ENCODE measurements at regions of chr3 and their contacts with region 1.

Region 1: DNA sequence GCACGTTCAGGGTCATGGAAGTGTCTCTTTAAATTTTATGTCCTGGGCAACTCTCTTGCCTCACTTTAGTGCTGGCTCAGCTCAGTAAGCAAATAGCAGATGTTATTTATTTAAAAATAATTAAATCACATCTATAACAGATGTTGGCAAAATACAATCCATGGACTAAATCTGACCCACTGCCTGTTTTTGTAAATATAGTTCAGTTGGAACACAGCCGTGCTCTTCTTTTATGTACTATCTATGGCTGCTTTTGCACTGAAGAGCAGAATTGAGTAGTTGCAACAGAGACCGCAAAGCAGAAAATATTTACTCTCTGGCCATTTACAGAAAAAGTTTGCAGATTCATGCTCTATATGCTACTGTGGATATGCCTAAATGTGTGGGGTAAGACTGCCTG is 79.2 kb downstream of the SAMMSON start:
- DNase-seq: no peak
- H3K4me3 ChIP-seq: no peak overlapping the region
- H3K27ac ChIP-seq: no peak overlapping the region
- H3K4me1 ChIP-seq: no peaks in the 10 kb centered on the region; a peak in 1 of 4 replicates
- H3K27me3 ChIP-seq: no peaks in the 10 kb centered on the region
- CTCF ChIP-seq: no peak
- EP300 ChIP-seq: peak in 1 of 2 experiments; percentile 21; a peak in 1 of 4 replicates
- RAD21 ChIP-seq: no peak

Region 2: DNA sequence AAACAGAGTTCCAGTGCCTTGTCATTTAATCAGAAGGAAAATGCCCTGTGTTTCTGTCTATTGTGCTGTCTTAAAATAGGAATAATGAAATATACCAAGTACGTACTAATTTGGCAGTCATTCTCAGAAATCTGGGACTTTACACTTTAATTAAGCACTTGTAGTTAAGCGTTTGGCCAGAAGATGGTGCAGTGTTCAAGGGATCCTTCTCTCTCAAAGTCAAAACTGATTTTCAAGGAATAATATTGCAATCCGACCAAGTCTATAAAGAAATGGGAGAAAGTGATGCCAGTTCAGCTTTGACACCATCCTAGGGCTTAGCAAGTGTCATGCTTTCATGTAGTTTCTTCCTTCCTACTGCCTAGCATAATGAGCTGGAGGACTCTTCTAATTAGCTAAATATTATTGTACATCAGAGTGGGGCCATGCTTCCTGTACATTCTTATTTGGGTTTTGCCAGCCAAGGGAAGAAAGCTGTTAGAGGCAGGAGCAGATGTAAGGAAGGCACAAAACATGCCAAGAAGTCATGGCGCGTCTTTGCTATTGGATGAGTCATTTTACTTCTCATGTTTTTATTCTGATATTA is 14.5 kb before region 1 on chr3:
- CTCF ChIA-PET with region 1: interaction called, 21 read pairs
- POLR2A ChIA-PET with region 1: no interaction called
- DNase-seq: peak; percentile 8
- H3K4me3 ChIP-seq: peak overlapping the region in 1 of 2 experiments; percentile 5; a peak in 1 of 4 replicates
- H3K27ac ChIP-seq: no peak overlapping the region
- H3K4me1 ChIP-seq: no peaks in the 10 kb centered on the region
- H3K27me3 ChIP-seq: no peaks in the 10 kb centered on the region
- CTCF ChIP-seq: peak; percentile 75
- EP300 ChIP-seq: no peak
- RAD21 ChIP-seq: peak; percentile 83

Measured in SK-N-SH (cell line).